Posterior cingulate gyrus (tissue), 11 donors: ENCODE measurements at regions of chr17 and their contacts with region 1.

Region 1: DNA sequence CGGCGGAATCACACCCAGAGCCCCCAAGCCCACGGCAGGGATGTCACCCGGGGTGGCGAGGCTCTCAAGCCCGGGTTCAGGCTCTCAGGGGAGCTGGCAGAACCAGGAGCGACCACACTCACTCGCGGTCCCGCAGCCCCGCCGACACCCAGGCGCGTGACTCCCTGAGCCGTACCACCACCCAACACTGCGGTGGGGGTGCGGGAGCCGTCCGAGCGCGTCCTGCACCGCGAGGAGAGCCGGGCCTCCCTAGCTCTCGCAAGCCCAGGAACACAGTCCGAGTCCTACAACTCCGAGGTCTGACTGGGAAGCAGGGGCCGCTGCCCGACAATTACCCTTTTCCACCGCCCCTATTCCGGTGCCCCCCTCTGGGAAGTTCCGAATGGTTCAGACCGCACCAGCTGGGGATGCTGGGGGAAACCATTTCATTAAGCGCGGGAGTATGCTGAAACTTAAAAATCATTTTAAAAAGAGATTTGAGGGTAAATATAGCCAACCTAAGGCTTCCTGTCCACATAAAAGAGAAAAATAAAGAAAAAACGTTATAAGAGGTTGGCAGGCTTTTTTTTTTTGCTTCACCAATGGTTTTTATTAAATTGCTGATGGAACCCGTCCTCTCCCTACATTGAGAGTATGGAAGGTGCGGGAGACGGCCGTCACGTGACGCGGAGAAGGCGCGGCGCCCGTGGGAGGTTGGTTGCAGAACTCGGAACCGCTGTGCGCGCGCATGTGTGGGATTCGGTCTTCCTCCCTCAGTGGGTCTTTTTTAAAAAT is at the start of gene FLCN:
- DNase-seq: peak; percentile 90 to 99 (median 94)

Region 2: GRCh38 chr17:17280613-17281549 is 43.7 kb after region 1 on chr17 and contains the start of gene COPS3:
- intact Hi-C with region 1: loop called (anchors 2 kb)
- DNase-seq: peak; percentile 98 to 100 (median 99)